GM12878 (cell line): ENCODE measurements at regions of chr5 and their contacts with region 1.

Region 1: GRCh38 chr5:143435210-143435657 is 31.7 kb upstream of the NR3C1 start:
- DNase-seq: peak; percentile 98
- ATAC-seq: peak; percentile 81
- H3K4me3 ChIP-seq: peak overlapping the region; percentile 49; the same call in 1 of the 2 replicates
- H3K27ac ChIP-seq: peak overlapping the region; percentile 89
- H3K4me1 ChIP-seq: peaks cover 16% of the 10 kb centered on the region
- H3K27me3 ChIP-seq: no peaks in the 10 kb centered on the region
- CTCF ChIP-seq: no peak
- EP300 ChIP-seq: peak; percentile 88 to 96
- POLR2A ChIP-seq: 0 out of 2 replicates have a peak, but pooled peaks have one; percentile 33
- RAD21 ChIP-seq: peak; percentile 42; the same call in 1 of the 2 replicates

Region 2: GRCh38 chr5:143386725-143387124 is 48.5 kb before region 1 on chr5:
- CTCF ChIA-PET with region 1: no interaction called
- POLR2A ChIA-PET with region 1: no interaction called
- RAD21 ChIA-PET with region 1: no interaction called
- SMC1A ChIA-PET with region 1: interaction called, 12 read pairs
- in situ Hi-C with region 1: no loop called
- intact Hi-C with region 1: no loop called
- DNase-seq: no peak
- ATAC-seq: no peak
- H3K4me3 ChIP-seq: no peak overlapping the region
- H3K27ac ChIP-seq: no peak overlapping the region
- H3K4me1 ChIP-seq: no peaks in the 10 kb centered on the region
- H3K27me3 ChIP-seq: no peaks in the 10 kb centered on the region
- CTCF ChIP-seq: no peak
- EP300 ChIP-seq: no peak
- POLR2A ChIP-seq: no peak
- RAD21 ChIP-seq: no peak

Region 3: DNA sequence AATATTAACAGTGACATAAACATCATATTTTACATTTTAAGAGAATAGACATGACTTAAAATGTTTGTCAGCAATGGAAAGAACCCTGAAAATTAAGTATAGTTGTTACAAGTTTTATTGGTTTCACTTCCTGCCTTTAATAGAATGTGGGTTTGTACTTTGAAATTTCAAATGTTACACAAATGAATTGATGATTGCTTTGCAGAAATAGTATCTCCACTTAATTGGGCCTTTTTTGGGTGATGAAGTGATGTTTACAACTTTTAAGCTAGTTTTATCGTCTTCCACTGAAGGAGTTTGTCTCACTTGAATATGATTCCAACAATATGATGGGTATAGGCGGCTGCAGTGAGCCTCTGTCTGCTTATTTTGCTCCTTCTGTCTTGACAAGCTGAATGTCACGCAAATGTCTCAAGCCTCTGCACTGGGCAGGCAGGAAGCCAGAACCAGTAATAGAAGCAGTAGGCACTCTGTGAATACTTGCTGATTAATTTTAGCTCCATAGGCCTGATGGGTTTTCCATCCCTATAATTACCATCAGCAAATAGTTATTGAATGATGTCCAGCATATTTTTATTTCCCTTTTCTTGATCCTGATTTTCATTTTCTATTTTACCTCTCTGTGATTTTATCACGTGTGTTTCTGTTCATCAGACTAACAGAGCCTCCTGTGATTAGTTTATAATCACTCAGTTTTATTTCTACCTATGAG is 21.1 kb before region 1 on chr5:
- CTCF ChIA-PET with region 1: interaction called, 49 read pairs
- POLR2A ChIA-PET with region 1: interaction called, 138 read pairs
- RAD21 ChIA-PET with region 1: interaction called, 187 read pairs
- SMC1A ChIA-PET with region 1: interaction called, 260 read pairs
- in situ Hi-C with region 1: no loop called
- intact Hi-C with region 1: loop called (anchors 2 kb)
- DNase-seq: no peak
- ATAC-seq: peak; percentile 71
- H3K4me3 ChIP-seq: peak overlapping the region; percentile 16; the same call in 1 of the 2 replicates
- H3K27ac ChIP-seq: peak overlapping the region; percentile 76
- H3K4me1 ChIP-seq: peaks cover 43% of the 10 kb centered on the region
- H3K27me3 ChIP-seq: no peaks in the 10 kb centered on the region
- CTCF ChIP-seq: no peak
- EP300 ChIP-seq: peak; percentile 21 to 63; a peak in 2 of 4 replicates
- POLR2A ChIP-seq: no peak
- RAD21 ChIP-seq: no peak

Region 4: DNA sequence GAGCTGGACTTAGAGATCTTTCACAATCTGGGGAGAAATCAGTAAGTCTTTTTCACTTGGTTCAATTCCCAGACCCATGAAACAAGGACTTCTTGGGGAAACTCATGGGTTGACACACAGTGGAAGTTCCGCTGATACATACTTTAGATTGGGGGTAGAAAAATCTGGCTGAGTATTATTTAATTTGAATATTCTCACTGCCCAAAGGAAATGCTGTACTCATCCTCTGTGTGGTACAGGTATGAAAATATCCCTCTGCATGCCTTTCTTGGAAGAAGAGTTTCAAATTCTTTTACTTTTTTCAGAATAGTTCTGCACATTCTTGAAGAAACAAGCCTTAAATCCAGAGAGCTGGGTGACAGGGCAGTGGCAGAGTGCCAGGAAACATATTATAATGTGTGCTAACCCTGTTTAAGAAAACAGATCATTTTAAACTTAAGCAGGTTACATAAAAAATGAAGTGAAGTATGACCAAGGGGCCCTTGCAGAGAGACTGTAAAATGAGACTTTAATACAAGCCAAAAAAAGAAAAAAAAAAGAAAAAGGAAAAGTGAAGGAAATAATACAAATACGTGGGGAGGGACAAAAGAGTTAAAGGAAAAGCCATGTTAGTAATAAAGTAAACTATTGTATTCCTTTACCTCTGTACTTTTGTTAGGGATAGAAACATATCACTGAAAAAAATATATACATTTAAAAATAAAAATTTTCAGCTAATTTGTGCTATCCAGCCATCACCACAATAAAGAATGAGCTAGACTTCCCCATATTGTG is 141.7 kb after region 1 on chr5:
- CTCF ChIA-PET with region 1: no interaction called
- POLR2A ChIA-PET with region 1: interaction called, 3 read pairs
- RAD21 ChIA-PET with region 1: interaction called, 16 read pairs
- SMC1A ChIA-PET with region 1: interaction called, 20 read pairs
- in situ Hi-C with region 1: no loop called
- intact Hi-C with region 1: no loop called
- DNase-seq: no peak
- ATAC-seq: no peak
- H3K4me3 ChIP-seq: no peak overlapping the region
- H3K27ac ChIP-seq: no peak overlapping the region
- H3K4me1 ChIP-seq: peaks cover 3% of the 10 kb centered on the region; the same call in 1 of the 2 replicates
- H3K27me3 ChIP-seq: no peaks in the 10 kb centered on the region
- CTCF ChIP-seq: no peak
- EP300 ChIP-seq: no peak
- POLR2A ChIP-seq: no peak
- RAD21 ChIP-seq: no peak

Region 5: GRCh38 chr5:143592648-143593047 is 157.4 kb after region 1 on chr5:
- CTCF ChIA-PET with region 1: interaction called, 4 read pairs
- POLR2A ChIA-PET with region 1: interaction called, 6 read pairs
- RAD21 ChIA-PET with region 1: interaction called, 3 read pairs
- SMC1A ChIA-PET with region 1: interaction called, 14 read pairs
- in situ Hi-C with region 1: no loop called
- intact Hi-C with region 1: no loop called
- DNase-seq: no peak
- ATAC-seq: peak; percentile 81
- H3K4me3 ChIP-seq: no peak overlapping the region
- H3K27ac ChIP-seq: peak overlapping the region; percentile 57
- H3K4me1 ChIP-seq: peaks cover 33% of the 10 kb centered on the region
- H3K27me3 ChIP-seq: no peaks in the 10 kb centered on the region
- CTCF ChIP-seq: no peak
- EP300 ChIP-seq: peak; percentile 16 to 56; a peak in 1 of 4 replicates
- POLR2A ChIP-seq: no peak
- RAD21 ChIP-seq: no peak

Region 6: GRCh38 chr5:143641549-143642356 is 206.5 kb after region 1 on chr5:
- CTCF ChIA-PET with region 1: no interaction called
- POLR2A ChIA-PET with region 1: no interaction called
- RAD21 ChIA-PET with region 1: no interaction called
- SMC1A ChIA-PET with region 1: interaction called, 4 read pairs
- in situ Hi-C with region 1: no loop called
- intact Hi-C with region 1: loop called (anchors 1 kb)
- DNase-seq: peak; percentile 31
- ATAC-seq: peak; percentile 90
- H3K4me3 ChIP-seq: no peak overlapping the region
- H3K27ac ChIP-seq: no peak overlapping the region
- H3K4me1 ChIP-seq: peaks cover 20% of the 10 kb centered on the region; the same call in 1 of the 2 replicates
- H3K27me3 ChIP-seq: no peaks in the 10 kb centered on the region
- CTCF ChIP-seq: no peak
- EP300 ChIP-seq: no peak
- POLR2A ChIP-seq: no peak
- RAD21 ChIP-seq: no peak